K562 (cell line): ENCODE measurements at regions of chr1 and their contacts with region 1.

Region 1: DNA sequence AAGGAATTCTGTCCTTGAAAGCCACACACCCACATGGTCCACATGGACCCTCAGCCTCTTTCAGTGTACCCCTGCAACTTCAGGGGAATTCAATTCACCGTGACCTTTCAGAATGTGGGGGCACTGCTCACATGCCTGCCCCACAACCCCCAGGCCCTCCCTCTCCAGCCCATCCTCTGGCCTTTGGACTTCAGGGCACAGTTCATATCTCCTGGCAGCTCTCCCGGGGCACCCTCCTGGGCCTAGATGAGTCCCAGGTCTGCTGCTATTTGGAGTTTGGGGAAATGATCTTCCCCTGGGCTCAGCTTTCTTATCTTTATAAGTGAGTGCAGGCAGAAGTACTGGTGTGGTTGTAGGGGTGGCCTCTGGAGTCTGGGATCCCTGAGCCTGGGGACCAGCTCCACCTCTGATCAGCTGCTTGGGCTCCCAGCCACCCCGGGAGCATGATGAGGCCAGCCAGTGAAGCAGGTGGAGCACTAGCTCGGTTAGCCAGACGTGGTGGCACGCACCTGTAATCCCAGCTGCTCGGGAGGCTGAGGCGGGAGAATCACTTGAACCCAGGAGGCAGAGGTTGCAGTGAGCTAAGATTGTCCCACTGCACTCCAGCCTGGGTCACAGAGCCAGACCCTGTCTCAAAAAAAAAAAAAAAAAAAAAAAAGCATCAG is 15.8 kb downstream of the C1orf167 start:
- DNase-seq: no peak
- ATAC-seq: peak; percentile 37
- H3K4me3 ChIP-seq: no peak overlapping the region
- H3K27ac ChIP-seq: no peak overlapping the region
- H3K4me1 ChIP-seq: peaks cover 0 to 35% of the 10 kb centered on the region in 2 experiments; a peak in 3 of 5 replicates
- H3K27me3 ChIP-seq: no peaks in the 10 kb centered on the region
- CTCF ChIP-seq: no peak
- EP300 ChIP-seq: no peak
- POLR2A ChIP-seq: no peak
- RAD21 ChIP-seq: no peak

Region 2: GRCh38 chr1:11272832-11273594 is 504.8 kb before region 1 on chr1 and contains the start of gene UBIAD1:
- CTCF ChIA-PET with region 1: no interaction called
- POLR2A ChIA-PET with region 1: no interaction called
- in situ Hi-C with region 1: no loop called
- intact Hi-C with region 1: no loop called
- DNase-seq: peak; percentile 91 to 99 (median 98)
- ATAC-seq: peak; percentile 93
- H3K4me3 ChIP-seq: peak within 1 kb of the TSS; percentile 97
- H3K27ac ChIP-seq: peak within 1 kb of the TSS; percentile 93
- H3K4me1 ChIP-seq: peaks cover 18 to 23% of the 10 kb centered on the region in 2 experiments
- H3K27me3 ChIP-seq: no peaks in the 10 kb centered on the region
- CTCF ChIP-seq: peak in 2 of 3 experiments; percentile 19 to 39; a peak in 3 of 6 replicates
- EP300 ChIP-seq: no peak
- POLR2A ChIP-seq: peak; percentile 97
- RAD21 ChIP-seq: no peak
- polyA plus RNA-seq, gene UBIAD1: 6.2 to 7.2 TPM

Region 3: DNA sequence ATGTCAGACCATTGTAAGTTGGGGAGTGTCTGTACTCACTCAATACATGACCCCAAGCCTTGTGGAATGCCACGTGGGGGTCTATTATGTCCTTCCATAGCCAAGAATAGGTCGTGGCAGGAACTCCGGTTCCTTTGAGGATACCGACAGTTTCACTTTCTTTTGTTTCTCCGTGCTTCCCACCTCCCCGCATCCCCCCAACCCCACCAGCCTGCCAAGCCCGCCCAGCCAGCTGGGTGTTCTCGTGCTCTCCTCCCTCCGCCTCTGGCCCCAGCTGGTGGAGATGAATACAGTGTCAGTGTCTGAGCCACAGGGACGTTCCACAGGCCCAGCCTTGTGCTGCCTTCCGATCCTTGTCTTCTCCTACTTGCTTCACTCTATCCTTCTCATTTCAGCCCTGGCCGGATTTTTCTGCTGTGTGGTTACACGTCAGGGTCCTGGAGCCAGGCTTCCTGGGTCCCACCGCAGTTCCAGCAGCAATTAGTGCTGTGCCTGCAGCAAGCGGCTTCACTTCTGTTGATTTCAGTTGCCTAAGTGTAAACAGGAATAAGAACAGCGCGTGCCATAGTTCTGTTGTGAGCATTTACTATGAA is 46.0 kb before region 1 on chr1:
- CTCF ChIA-PET with region 1: no interaction called
- POLR2A ChIA-PET with region 1: no interaction called
- in situ Hi-C with region 1: no loop called
- intact Hi-C with region 1: no loop called
- DNase-seq: peak; percentile 57 to 74 (median 60)
- ATAC-seq: peak; percentile 41
- H3K4me3 ChIP-seq: peak overlapping the region; percentile 4; the same call in 1 of the 2 replicates
- H3K27ac ChIP-seq: peak overlapping the region; percentile 65
- H3K4me1 ChIP-seq: peaks cover 27 to 38% of the 10 kb centered on the region in 2 experiments
- H3K27me3 ChIP-seq: no peaks in the 10 kb centered on the region
- CTCF ChIP-seq: no peak
- EP300 ChIP-seq: no peak
- POLR2A ChIP-seq: no peak
- RAD21 ChIP-seq: no peak

Region 4: GRCh38 chr1:11761988-11762406 is 15.8 kb before region 1 on chr1 and contains the start of gene C1orf167:
- CTCF ChIA-PET with region 1: no interaction called
- POLR2A ChIA-PET with region 1: interaction called, 13 read pairs
- in situ Hi-C with region 1: no loop called
- intact Hi-C with region 1: no loop called
- DNase-seq: peak; percentile 80 to 92 (median 86)
- ATAC-seq: peak; percentile 94
- H3K4me3 ChIP-seq: peak within 1 kb of the TSS; percentile 27; the same call in 1 of the 2 replicates
- H3K27ac ChIP-seq: no peak within 1 kb of the TSS; the same call in 2 of the 3 replicates
- H3K4me1 ChIP-seq: peaks cover 8 to 42% of the 10 kb centered on the region in 2 experiments; a peak in 3 of 5 replicates
- H3K27me3 ChIP-seq: no peaks in the 10 kb centered on the region
- CTCF ChIP-seq: no peak
- EP300 ChIP-seq: no peak
- POLR2A ChIP-seq: no peak
- RAD21 ChIP-seq: no peak
- polyA plus RNA-seq, gene C1orf167: not detected

Region 5: GRCh38 chr1:11790880-11791715 is 13.3 kb after region 1 on chr1:
- CTCF ChIA-PET with region 1: no interaction called
- POLR2A ChIA-PET with region 1: interaction called, 66 read pairs
- in situ Hi-C with region 1: no loop called
- intact Hi-C with region 1: no loop called
- DNase-seq: peak; percentile 71 to 83 (median 74)
- ATAC-seq: peak; percentile 9
- H3K4me3 ChIP-seq: no peak overlapping the region
- H3K27ac ChIP-seq: peak overlapping the region; percentile 73
- H3K4me1 ChIP-seq: peaks cover 70 to 91% of the 10 kb centered on the region in 2 experiments
- H3K27me3 ChIP-seq: no peaks in the 10 kb centered on the region
- CTCF ChIP-seq: no peak
- EP300 ChIP-seq: peak; percentile 57; the same call in 1 of the 2 replicates
- POLR2A ChIP-seq: 0 out of 2 replicates have a peak, but pooled peaks have one; percentile 34
- RAD21 ChIP-seq: peak in 1 of 2 experiments; percentile 17; a peak in 1 of 4 replicates